ENCODE measurements at regions of chr11 and their contacts with region 1.

Region 1: DNA sequence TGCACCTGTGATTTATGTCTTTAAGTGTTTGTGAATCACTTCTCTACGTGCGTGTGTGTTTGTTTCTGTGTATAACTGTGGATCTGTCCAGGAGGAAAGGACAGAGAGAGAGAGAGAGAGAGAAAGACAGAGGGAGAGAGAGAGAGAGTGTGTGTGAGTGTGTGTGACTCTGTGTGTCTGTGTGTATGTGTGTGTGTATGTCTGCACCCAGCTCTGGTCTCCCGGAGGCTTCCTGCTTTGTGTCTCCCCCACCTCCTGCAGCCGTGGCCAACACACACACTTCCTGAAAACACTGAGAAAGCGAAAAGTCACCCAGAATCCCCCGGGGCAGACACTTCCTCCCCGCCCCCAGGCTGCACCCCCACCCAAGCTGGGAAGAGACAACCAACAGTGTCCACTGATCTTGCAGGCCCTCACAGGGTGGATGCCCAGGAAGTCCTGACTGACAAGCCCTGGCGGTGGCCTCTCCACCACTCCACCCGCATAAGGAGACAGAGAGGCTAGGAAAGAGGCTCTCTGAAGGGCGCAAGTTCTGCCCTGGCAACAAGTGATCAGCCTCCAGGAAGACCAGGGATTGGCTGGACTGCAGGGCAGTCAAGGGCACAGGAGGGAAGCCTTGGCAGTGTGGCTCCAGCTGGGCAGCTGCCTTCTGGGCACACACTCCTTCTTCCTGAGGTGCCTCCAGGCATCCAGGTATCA is 30.0 kb downstream of the ARAP1 start:
- H3K4me3 Mint-ChIP-seq: peak overlapping the region; percentile 91
- H3K27ac Mint-ChIP-seq: peak overlapping the region; percentile 93
- H3K4me1 Mint-ChIP-seq: peaks cover 97% of the 10 kb centered on the region
- H3K27me3 Mint-ChIP-seq: no peaks in the 10 kb centered on the region

Region 2: GRCh38 chr11:72736452-72737069 is 14.4 kb after region 1 on chr11:
- intact Hi-C with region 1: loop called (anchors 1 kb)
- H3K4me3 Mint-ChIP-seq: peak overlapping the region; percentile 95
- H3K27ac Mint-ChIP-seq: peak overlapping the region; percentile 90
- H3K4me1 Mint-ChIP-seq: peaks cover 88% of the 10 kb centered on the region
- H3K27me3 Mint-ChIP-seq: no peaks in the 10 kb centered on the region

Region 3: DNA sequence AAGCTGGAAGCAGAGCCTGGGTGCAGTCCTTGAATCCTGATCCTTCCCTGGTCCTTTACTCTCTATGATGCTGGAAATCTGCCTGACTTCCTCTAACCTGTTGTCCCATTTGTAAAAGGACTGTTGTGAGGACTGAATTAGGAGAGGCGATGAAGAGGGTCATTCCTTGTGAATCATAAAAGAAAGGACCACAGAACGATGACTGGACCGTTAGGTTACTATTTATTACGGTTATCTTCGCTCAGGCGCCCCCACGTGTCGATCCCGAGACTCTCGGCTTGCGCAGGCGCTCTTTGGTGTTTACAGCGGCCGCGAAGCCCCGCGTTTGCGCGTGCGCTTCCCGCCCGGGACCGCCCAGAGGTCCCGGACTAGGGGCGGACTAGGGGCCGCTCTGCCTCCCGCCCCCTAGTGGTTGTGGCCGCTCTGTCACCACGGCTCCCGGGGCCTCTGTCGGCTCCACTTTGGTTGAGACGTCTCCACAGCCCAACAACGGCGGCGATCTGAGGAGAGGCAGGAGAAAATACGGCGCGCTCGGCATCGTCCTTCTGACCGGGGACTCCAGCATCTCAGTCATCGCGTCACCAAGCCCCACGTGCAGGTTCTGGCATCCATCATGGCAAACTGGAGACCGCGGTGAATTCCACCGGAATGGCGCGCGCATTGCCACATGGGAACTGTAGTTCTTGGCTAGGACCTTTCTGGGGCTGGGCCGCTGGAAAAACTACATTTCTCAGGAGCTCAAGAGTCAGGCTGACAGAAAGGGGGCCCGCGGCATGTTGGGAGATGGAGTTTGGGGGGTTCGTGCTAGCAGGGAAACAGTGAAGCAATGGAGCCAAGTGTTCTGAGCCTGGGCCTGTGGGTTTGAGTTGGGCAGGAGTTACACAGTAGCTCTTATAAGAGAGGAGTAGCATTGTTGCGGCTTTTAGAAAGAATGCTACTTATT is 71.5 kb after region 1 on chr11 and contains the start of gene STARD10:
- intact Hi-C with region 1: loop called (anchors 1 kb)
- H3K4me3 Mint-ChIP-seq: peak within 1 kb of the TSS; percentile 95
- H3K27ac Mint-ChIP-seq: peak within 1 kb of the TSS; percentile 93
- H3K4me1 Mint-ChIP-seq: peaks cover 47% of the 10 kb centered on the region
- H3K27me3 Mint-ChIP-seq: no peaks in the 10 kb centered on the region

Region 4: GRCh38 chr11:72814286-72815109 is 92.3 kb after region 1 on chr11 and contains the start of gene ATG16L2:
- intact Hi-C with region 1: loop called (anchors 2 kb)
- H3K4me3 Mint-ChIP-seq: peak within 1 kb of the TSS; percentile 96
- H3K27ac Mint-ChIP-seq: peak within 1 kb of the TSS; percentile 90
- H3K4me1 Mint-ChIP-seq: peaks cover 78% of the 10 kb centered on the region
- H3K27me3 Mint-ChIP-seq: no peaks in the 10 kb centered on the region